ENCODE measurements at regions of chr17 and their contacts with region 1.

Region 1: GRCh38 chr17:32519228-32520103 is 32.7 kb downstream of the CDK5R1 start:
- DNase-seq: peak; percentile 70
- ATAC-seq: peak; percentile 45
- H3K4me3 Mint-ChIP-seq: peak overlapping the region; percentile 74
- H3K27ac Mint-ChIP-seq: peak overlapping the region; percentile 87
- H3K4me1 Mint-ChIP-seq: peaks cover 85% of the 10 kb centered on the region
- H3K27me3 Mint-ChIP-seq: no peaks in the 10 kb centered on the region

Region 2: DNA sequence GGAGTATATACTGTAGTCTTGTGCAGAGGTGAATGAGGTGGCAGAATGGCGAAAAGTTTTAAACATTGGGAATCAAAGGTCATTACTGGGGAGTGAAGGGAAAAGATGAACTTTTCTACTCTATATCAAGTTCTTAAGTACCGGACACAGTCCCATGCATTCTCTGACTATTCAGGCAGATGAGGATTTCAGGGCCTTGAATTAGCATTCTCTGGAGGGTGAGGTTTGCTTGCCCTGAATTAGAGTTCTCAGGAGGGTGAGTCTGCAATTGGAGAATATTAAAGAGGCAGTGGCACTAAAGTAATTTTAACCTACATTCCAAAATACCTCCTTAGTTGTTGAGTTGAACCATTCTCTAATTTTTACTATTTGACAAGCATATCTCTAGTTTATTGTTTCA is 66.1 kb before region 1 on chr17:
- CTCF ChIA-PET with region 1: no interaction called
- POLR2A ChIA-PET with region 1: no interaction called
- DNase-seq: no peak
- ATAC-seq: no peak
- H3K4me3 Mint-ChIP-seq: no peak overlapping the region
- H3K27ac Mint-ChIP-seq: no peak overlapping the region
- H3K4me1 Mint-ChIP-seq: peaks cover 18% of the 10 kb centered on the region
- H3K27me3 Mint-ChIP-seq: no peaks in the 10 kb centered on the region

Region 3: DNA sequence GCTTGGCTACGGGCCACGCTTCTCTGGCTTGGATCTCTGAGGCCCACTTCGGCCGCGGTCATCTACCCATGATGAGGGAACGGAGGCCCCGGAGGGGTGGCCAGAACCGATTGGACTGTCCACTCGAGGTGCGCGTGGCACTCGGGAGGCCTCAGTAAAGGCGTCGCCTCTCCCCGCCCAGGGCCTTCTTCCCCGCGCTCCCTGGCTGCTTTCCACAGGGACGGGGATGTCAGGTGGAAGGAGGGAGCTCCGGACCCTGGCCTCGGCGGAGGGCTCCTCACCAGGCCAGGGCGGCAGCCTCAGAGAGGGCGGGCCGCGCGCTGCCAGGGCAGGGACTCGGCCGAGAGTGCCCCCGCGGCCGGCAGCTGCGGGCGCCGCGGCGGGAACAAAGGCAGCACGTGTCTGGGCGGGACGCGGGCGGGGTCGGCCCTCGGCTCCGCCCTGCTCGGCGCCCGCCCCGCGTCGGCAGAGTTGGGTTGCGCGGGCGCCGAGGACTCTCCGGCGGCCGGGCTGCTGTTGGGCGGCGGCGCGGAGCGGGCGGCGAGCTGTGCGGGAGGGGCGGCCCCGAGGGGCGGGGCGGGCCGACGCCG is 33.3 kb before region 1 on chr17:
- CTCF ChIA-PET with region 1: interaction called, 18 read pairs
- POLR2A ChIA-PET with region 1: interaction called, 12 read pairs
- DNase-seq: peak; percentile 62
- ATAC-seq: peak; percentile 80
- H3K4me3 Mint-ChIP-seq: peak overlapping the region; percentile 62
- H3K27ac Mint-ChIP-seq: peak overlapping the region; percentile 39
- H3K4me1 Mint-ChIP-seq: peaks cover 42% of the 10 kb centered on the region
- H3K27me3 Mint-ChIP-seq: no peaks in the 10 kb centered on the region

Region 4: GRCh38 chr17:32491371-32492263 is 27.8 kb before region 1 on chr17:
- CTCF ChIA-PET with region 1: interaction called, 18 read pairs
- POLR2A ChIA-PET with region 1: interaction called, 12 read pairs
- DNase-seq: no peak
- ATAC-seq: no peak
- H3K4me3 Mint-ChIP-seq: no peak overlapping the region
- H3K27ac Mint-ChIP-seq: peak overlapping the region; percentile 86
- H3K4me1 Mint-ChIP-seq: peaks cover 72% of the 10 kb centered on the region
- H3K27me3 Mint-ChIP-seq: no peaks in the 10 kb centered on the region

Region 5: DNA sequence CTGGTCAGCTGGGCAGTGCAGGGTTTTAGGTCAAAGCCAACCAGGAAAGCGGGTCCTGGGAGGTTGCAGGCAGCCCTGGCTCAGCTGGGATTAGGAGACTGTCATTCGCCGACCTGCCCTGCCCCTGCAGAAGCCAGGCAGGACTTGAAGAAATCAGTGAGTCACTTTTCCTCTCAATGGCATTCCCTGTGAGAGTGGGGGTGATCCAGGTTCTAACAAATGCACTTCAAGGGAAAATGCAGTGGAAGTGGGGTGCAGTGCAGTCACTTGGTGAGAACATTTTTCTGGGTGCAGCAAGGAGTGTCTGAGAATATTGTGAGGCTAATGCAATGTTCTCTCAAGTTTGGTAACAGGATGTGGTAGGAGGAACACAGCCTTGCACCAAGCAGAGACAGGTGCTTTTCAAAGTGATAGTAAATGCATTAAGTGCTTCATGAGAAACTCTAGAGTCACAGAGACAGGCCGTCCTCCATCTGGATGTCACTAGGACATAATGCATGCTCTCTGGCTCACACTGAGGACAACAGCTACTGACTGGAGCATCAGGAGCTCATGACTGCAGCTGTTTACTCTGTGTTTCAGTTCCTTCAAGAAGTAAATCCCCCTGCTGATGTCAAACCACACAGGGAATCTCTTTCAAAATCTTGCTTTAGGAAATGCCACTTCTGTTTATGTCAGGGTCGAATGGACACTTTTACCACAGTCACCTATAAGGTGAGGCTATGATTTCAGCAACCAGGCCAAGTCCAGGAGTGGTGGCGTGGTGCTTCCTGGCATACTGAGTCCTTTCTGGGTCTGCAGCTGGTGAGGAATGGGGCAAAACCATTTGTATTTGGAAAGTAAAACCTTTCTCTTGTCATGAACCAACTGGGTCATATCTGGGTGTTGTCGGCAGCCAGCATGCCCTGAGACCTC is 16.0 kb before region 1 on chr17:
- CTCF ChIA-PET with region 1: interaction called, 3 read pairs
- POLR2A ChIA-PET with region 1: interaction called, 22 read pairs
- DNase-seq: peak; percentile 76
- ATAC-seq: peak; percentile 96
- H3K4me3 Mint-ChIP-seq: peak overlapping the region; percentile 69
- H3K27ac Mint-ChIP-seq: peak overlapping the region; percentile 100
- H3K4me1 Mint-ChIP-seq: peaks cover 39% of the 10 kb centered on the region
- H3K27me3 Mint-ChIP-seq: no peaks in the 10 kb centered on the region